ENCODE measurements at regions of chr20 and their contacts with region 1.

Region 1: DNA sequence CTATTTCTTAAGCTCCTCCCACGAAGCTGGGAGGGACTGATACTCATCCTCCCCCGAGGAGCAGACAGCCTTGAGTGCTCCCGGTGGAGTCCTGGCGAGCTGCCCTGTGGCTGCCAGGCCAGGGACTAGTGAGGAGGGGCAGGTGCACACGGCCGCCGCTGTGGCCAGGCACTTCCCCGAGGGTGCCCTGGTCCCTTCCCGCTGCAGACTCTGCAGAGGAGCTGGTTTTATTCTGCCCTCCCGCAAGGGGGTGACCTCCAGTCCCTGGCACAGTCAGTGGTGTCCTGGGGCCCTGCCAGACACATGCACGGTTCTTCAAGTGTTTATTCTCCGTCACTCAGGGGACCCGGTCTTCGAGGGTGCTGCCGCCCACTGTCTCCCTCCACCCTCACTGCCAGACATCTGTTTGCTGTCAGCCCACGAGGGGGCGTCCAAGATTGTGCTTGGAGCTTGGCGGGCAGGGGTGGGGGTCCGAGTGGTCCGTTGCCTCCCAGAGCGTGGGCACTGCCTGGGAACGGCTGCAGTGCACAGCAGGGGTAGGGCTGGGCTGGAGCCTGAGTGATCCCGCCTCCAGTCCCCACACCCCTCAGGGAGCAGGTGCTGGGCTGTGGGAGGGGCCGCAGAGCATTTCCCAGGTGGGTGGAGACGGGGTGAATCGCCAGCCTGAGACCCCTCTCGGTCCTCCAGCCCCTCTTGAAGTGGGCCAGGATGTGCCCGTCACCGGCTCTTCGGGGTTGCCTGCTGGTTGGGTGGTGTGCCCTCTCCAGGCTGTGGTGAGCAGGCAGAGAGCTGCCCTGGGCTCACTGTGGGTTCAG is 3.1 kb upstream of the CABLES2 start:
- DNase-seq: no peak
- ATAC-seq: no peak
- H3K4me3 ChIP-seq: no peak overlapping the region
- H3K27ac ChIP-seq: no peak overlapping the region
- H3K4me1 ChIP-seq: peaks cover 6% of the 10 kb centered on the region; the same call in 1 of the 2 replicates
- H3K27me3 ChIP-seq: peaks cover 8% of the 10 kb centered on the region; the same call in 1 of the 2 replicates
- CTCF ChIP-seq: peak; percentile 52
- POLR2A ChIP-seq: no peak
- RAD21 ChIP-seq: peak; percentile 51

Region 2: GRCh38 chr20:62088237-62089127 is 321.7 kb before region 1 on chr20:
- CTCF ChIA-PET with region 1: no interaction called
- POLR2A ChIA-PET with region 1: no interaction called
- dilution Hi-C with region 1: no loop called
- in situ Hi-C with region 1: no loop called
- intact Hi-C with region 1: no loop called
- DNase-seq: peak; percentile 99
- ATAC-seq: peak; percentile 95
- H3K4me3 ChIP-seq: no peak overlapping the region
- H3K27ac ChIP-seq: no peak overlapping the region
- H3K4me1 ChIP-seq: peaks cover 7% of the 10 kb centered on the region
- H3K27me3 ChIP-seq: peaks cover 9% of the 10 kb centered on the region; the same call in 1 of the 2 replicates
- CTCF ChIP-seq: no peak
- POLR2A ChIP-seq: no peak
- RAD21 ChIP-seq: no peak

Region 3: DNA sequence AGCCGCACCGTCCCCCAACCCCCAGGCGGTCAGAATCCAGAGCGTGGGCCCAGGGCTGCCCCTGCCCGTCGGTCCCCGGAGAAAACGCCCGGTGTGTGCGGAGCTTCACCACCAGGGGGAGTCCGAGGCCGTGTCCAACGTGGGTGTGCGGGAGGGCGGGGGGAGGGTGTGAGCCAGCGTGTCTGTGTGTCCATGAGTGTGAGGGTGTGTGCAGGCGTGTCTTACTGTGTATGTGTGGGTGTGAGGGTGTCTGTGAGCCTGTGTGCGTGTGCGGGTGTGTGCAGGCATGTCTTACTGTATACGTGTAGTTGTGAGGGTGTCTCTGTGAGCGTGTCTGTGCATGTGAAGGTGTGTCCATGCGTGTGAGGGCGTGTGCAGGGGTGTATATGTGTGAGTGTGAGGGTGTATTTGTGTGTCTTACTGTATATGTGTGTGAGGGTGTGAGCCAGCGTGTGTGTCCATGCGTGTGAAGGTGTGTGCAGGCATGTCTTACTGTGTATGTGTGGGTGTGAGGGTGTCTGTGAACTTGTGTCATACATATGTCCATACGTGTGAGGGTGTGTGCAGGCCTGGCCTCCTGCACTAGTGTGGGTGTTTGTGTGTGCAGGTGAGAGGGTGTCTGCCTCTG is 90.2 kb after region 1 on chr20:
- CTCF ChIA-PET with region 1: no interaction called
- POLR2A ChIA-PET with region 1: no interaction called
- dilution Hi-C with region 1: no loop called
- in situ Hi-C with region 1: no loop called
- intact Hi-C with region 1: loop called (anchors 1 kb)
- DNase-seq: peak; percentile 20
- ATAC-seq: peak; percentile 93
- H3K4me3 ChIP-seq: no peak overlapping the region
- H3K27ac ChIP-seq: no peak overlapping the region
- H3K4me1 ChIP-seq: no peaks in the 10 kb centered on the region
- H3K27me3 ChIP-seq: peaks cover 18% of the 10 kb centered on the region; the same call in 1 of the 2 replicates
- CTCF ChIP-seq: peak; percentile 72
- POLR2A ChIP-seq: no peak
- RAD21 ChIP-seq: peak; percentile 63

Region 4: DNA sequence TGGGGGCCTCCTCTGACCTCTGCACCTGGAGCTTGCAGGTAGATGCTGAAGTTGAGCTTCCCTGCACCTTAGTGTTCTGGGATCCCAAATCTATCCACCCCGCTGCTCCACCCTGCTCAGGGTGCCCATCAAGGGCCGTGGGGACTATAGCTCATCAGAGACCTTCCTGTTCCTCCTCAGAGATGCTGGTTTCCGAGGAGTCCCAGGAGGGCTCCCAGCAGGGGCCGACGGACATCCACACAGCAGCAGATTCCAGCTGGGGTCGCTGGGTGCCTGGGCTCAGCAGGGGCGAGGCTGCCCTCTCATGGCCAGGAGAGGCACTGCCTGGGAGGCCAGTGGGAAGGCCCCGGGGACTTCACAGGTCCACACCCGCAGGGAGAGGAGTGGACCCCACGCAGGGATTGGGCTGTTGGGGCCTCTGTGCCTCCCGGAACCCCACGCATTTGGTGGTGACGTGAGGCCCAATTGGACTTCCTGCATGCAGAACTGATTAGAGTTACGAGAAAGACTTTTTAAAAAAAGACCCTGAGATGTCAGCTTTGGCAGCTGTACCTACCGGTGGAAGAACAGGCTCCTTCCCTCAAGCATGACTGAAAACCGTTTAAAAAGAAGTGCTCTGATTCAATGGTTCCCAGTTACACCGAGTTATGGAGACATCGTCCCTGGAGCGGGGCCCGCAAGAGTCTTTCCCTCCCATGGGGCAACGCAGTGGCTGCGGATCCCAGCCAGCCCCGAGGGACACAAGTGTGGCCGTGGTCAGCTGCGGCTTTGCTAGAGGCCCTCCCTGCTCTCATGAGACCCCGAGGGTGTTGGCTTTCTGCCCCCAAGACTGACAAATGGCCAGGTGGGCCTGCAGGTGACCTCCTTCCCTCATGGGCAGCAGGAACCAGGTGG is 206.8 kb after region 1 on chr20:
- CTCF ChIA-PET with region 1: no interaction called
- POLR2A ChIA-PET with region 1: no interaction called
- dilution Hi-C with region 1: no loop called
- in situ Hi-C with region 1: no loop called
- intact Hi-C with region 1: loop called (anchors 1 kb)
- DNase-seq: peak; percentile 49
- ATAC-seq: peak; percentile 99
- H3K4me3 ChIP-seq: no peak overlapping the region
- H3K27ac ChIP-seq: no peak overlapping the region
- H3K4me1 ChIP-seq: no peaks in the 10 kb centered on the region; the same call in 1 of the 2 replicates
- H3K27me3 ChIP-seq: peaks cover 22% of the 10 kb centered on the region
- CTCF ChIP-seq: peak; percentile 95
- POLR2A ChIP-seq: no peak
- RAD21 ChIP-seq: peak; percentile 92